ENCODE measurements at regions of chr6 and their contacts with region 1.

Region 1: DNA sequence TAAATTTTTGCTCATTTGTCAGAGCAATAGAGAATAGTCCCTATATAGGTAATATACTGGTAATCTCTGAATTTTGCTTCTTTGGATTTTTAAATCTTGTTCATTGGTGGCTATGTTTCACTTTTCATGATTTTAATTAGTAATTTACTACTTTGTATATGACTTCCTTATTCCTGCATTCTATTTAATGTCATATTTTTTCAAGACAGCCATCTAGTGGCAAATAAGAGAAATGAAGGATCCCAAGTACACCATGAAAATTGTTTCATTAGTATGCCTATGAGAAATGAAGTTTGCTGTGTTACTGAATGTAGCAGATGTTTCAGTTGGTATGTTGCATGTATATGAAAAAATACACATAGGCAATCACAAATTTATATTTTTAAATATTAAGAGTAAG is 82.4 kb downstream of the ZNF292 start:
- DNase-seq: no peak
- ATAC-seq: peak; percentile 64
- H3K4me3 Mint-ChIP-seq: no peak overlapping the region
- H3K27ac Mint-ChIP-seq: no peak overlapping the region
- H3K4me1 Mint-ChIP-seq: no peaks in the 10 kb centered on the region
- H3K27me3 Mint-ChIP-seq: no peaks in the 10 kb centered on the region

Region 2: GRCh38 chr6:87139236-87139635 is 98.6 kb before region 1 on chr6:
- CTCF ChIA-PET with region 1: interaction called, 3 read pairs
- POLR2A ChIA-PET with region 1: no interaction called
- intact Hi-C with region 1: loop called (anchors 1 kb)
- DNase-seq: peak; percentile 43
- ATAC-seq: peak; percentile 70
- H3K4me3 Mint-ChIP-seq: no peak overlapping the region
- H3K27ac Mint-ChIP-seq: no peak overlapping the region
- H3K4me1 Mint-ChIP-seq: peaks cover 2% of the 10 kb centered on the region
- H3K27me3 Mint-ChIP-seq: peaks cover 7% of the 10 kb centered on the region

Region 3: GRCh38 chr6:87277123-87277522 is 39.3 kb after region 1 on chr6:
- CTCF ChIA-PET with region 1: no interaction called
- POLR2A ChIA-PET with region 1: no interaction called
- intact Hi-C with region 1: no loop called
- DNase-seq: no peak
- ATAC-seq: no peak
- H3K4me3 Mint-ChIP-seq: no peak overlapping the region
- H3K27ac Mint-ChIP-seq: no peak overlapping the region
- H3K4me1 Mint-ChIP-seq: peaks cover 9% of the 10 kb centered on the region
- H3K27me3 Mint-ChIP-seq: no peaks in the 10 kb centered on the region

Measured in activated CD4-positive, alpha-beta T cell treated with anti-CD3 and anti-CD28 coated beads for 36 hours (primary cell).